A549 (cell line): ENCODE measurements at regions of chr12 and their contacts with region 1.

Region 1: DNA sequence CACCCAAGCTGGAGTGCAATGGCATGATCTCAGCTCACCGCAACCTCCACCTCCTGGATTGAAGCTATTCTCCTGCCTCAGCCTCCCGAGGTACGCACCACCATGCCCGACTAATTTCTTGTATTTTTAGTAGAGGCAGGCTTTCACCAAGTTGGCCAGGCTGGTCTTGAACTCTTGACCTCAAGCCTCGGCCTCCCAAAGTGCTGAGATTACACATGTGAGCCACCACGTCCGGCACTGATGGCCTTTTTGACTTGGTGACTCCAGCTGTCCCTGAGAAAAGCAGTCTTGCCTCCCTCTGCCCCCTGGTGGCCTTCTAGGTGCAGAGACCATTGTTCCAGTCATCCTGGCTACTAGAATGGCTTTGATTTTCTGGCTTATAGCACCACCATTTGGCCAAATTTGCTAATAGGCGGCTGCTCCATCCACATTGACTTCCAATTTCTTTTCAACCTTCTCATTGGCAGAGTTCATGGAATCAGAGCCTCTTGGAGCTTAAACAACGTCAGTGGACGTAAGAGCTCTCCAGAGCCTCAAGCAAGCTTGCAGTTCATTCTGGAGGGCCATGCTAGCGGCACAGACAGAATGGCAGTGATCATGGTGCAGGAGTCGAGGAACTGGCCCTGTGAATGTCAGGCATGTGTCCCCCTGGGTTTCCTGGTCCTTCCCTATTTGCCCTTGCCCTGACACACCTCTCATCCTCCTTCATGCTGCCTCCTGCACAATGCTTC is 25.4 kb upstream of the EIF4B start:
- DNase-seq: peak; percentile 89 to 97
- ATAC-seq: peak; percentile 76 to 84
- H3K4me3 ChIP-seq: no peak overlapping the region
- H3K27ac ChIP-seq: peak overlapping the region; percentile 39 to 91
- H3K4me1 ChIP-seq: peaks cover 28% of the 10 kb centered on the region
- CTCF ChIP-seq: peak; percentile 100
- EP300 ChIP-seq: no peak
- POLR2A ChIP-seq: no peak
- RAD21 ChIP-seq: peak; percentile 100

Region 2: GRCh38 chr12:52130711-52131110 is 850.1 kb before region 1 on chr12:
- CTCF ChIA-PET with region 1: interaction called, 12 read pairs
- POLR2A ChIA-PET with region 1: no interaction called
- DNase-seq: no peak
- ATAC-seq: no peak
- H3K4me3 ChIP-seq: no peak overlapping the region
- H3K27ac ChIP-seq: no peak overlapping the region
- H3K4me1 ChIP-seq: no peaks in the 10 kb centered on the region
- CTCF ChIP-seq: no peak
- EP300 ChIP-seq: no peak
- POLR2A ChIP-seq: no peak
- RAD21 ChIP-seq: no peak

Region 3: GRCh38 chr12:52156736-52157565 is 823.9 kb before region 1 on chr12:
- CTCF ChIA-PET with region 1: interaction called, 11 read pairs
- POLR2A ChIA-PET with region 1: no interaction called
- DNase-seq: peak; percentile 81 to 88
- ATAC-seq: peak; percentile 72 to 78
- H3K4me3 ChIP-seq: no peak overlapping the region
- H3K27ac ChIP-seq: peak overlapping the region; percentile 100
- H3K4me1 ChIP-seq: peaks cover 63% of the 10 kb centered on the region
- CTCF ChIP-seq: peak; percentile 97
- EP300 ChIP-seq: no peak
- POLR2A ChIP-seq: no peak
- RAD21 ChIP-seq: peak; percentile 99 to 100

Region 4: DNA sequence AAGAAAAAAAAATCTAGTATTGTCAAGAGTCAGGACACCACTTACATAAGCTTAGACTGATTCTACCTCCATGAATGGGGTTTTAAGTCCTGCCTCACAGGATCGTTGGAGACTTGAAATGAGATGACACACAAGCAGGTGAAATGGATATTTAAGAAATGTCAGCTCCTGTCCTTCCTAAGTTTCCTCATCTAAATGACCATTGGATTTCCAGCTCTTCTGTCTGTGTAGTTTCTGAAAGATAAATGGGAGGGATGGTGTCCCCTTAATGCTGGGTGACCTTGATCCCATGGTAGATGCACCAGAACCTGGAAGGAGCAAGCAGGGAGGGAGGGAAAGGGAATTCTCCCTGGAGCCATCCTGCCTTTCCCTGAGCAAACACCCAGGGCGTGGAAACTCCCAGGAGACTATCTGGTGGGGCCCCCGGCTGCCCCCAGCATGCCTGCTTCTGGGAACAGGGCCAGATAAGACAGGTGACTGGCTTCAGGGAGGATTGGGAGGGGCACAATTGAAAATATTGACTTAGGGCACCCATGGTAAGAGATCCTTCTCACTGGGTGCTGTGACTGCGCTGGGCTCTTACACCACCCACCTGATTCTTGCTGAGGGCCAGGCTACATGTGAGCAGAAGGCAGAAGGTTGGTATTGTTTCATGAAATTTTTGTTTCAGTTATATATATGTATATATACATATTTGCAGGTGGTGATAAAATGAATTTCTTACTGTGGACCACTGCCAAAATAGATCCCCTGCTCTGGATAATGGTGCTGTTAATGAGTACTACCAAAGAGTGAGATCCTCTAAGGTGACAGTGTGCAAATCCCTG is 85.6 kb before region 1 on chr12:
- CTCF ChIA-PET with region 1: interaction called, 1,736 read pairs
- POLR2A ChIA-PET with region 1: interaction called, 4 read pairs
- DNase-seq: peak; percentile 85 to 98
- ATAC-seq: peak; percentile 66 to 71
- H3K4me3 ChIP-seq: 0 out of 3 replicates have a peak overlapping the region, but pooled peaks have one; percentile 7
- H3K27ac ChIP-seq: peak overlapping the region; percentile 78 to 91
- H3K4me1 ChIP-seq: peaks cover 59% of the 10 kb centered on the region
- CTCF ChIP-seq: no peak
- EP300 ChIP-seq: peak; percentile 76 to 84; a peak in 2 of 5 replicates
- POLR2A ChIP-seq: no peak
- RAD21 ChIP-seq: 0 out of 5 replicates have a peak, but pooled peaks of 1 of the 2 experiments have one; percentile 27

Region 5: GRCh38 chr12:52924764-52925716 is 55.8 kb before region 1 on chr12:
- CTCF ChIA-PET with region 1: interaction called, 39 read pairs
- POLR2A ChIA-PET with region 1: interaction called, 3 read pairs
- DNase-seq: peak; percentile 85 to 94
- ATAC-seq: peak; percentile 57 to 80
- H3K4me3 ChIP-seq: peak overlapping the region; percentile 27; the same call in 2 of the 3 replicates
- H3K27ac ChIP-seq: peak overlapping the region; percentile 96 to 97
- H3K4me1 ChIP-seq: peaks cover 85% of the 10 kb centered on the region
- CTCF ChIP-seq: no peak
- EP300 ChIP-seq: peak; percentile 62 to 90; a peak in 4 of 5 replicates
- POLR2A ChIP-seq: no peak
- RAD21 ChIP-seq: peak in 1 of 2 experiments; percentile 32; a peak in 2 of 5 replicates

Region 6: GRCh38 chr12:52956987-52957386 is 23.9 kb before region 1 on chr12:
- CTCF ChIA-PET with region 1: interaction called, 171 read pairs
- POLR2A ChIA-PET with region 1: no interaction called
- DNase-seq: peak in 1 of 2 experiments; percentile 69
- ATAC-seq: peak; percentile 25 to 43; a peak in 3 of 6 replicates
- H3K4me3 ChIP-seq: no peak overlapping the region
- H3K27ac ChIP-seq: peak overlapping the region; percentile 18 to 61; a peak in 3 of 6 replicates
- H3K4me1 ChIP-seq: peaks cover 21% of the 10 kb centered on the region
- CTCF ChIP-seq: no peak
- EP300 ChIP-seq: no peak
- POLR2A ChIP-seq: no peak
- RAD21 ChIP-seq: no peak

Region 7: GRCh38 chr12:53005986-53006809 is 25.3 kb after region 1 on chr12 and contains the start of gene EIF4B:
- CTCF ChIA-PET with region 1: interaction called, 32 read pairs
- POLR2A ChIA-PET with region 1: interaction called, 3 read pairs
- DNase-seq: peak; percentile 96 to 100
- ATAC-seq: peak; percentile 94 to 95
- H3K4me3 ChIP-seq: peak within 1 kb of the TSS; percentile 88
- H3K27ac ChIP-seq: peak within 1 kb of the TSS; percentile 95 to 99
- H3K4me1 ChIP-seq: peaks cover 47% of the 10 kb centered on the region
- CTCF ChIP-seq: no peak
- EP300 ChIP-seq: peak in 1 of 2 experiments; percentile 3; a peak in 1 of 5 replicates
- POLR2A ChIP-seq: peak; percentile 63
- RAD21 ChIP-seq: no peak
- polyA plus RNA-seq, gene EIF4B: 577 and 650 TPM in 2 replicates

Region 8: DNA sequence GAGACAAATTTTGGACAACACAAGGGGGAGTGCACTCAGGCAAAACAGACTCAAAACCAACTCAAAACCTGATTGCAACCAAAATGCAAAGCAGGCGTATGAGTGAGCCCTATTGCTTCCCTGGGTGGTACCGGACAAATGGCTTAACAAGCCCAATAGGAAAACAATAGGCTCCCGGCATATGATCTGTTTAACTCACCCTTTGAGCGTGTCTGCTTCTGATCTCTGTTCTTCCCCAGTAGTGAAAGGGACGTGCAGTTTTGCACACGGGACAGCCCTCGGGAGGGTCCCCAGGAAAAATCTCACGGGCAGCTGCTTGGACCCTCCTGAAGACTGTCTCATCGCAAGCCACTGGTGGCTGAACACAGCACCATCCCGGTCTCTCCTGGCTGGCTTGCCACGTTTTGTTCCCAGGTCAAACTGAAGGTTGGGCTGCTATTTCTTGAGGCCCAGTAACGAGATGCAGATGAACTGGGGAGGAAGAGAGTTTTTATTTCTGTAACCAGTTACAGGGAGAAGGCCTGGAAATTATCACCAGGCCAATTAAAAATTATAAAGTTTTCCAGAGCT is 132.4 kb after region 1 on chr12:
- CTCF ChIA-PET with region 1: no interaction called
- POLR2A ChIA-PET with region 1: no interaction called
- DNase-seq: no peak
- ATAC-seq: no peak
- H3K4me3 ChIP-seq: no peak overlapping the region
- H3K27ac ChIP-seq: no peak overlapping the region
- H3K4me1 ChIP-seq: no peaks in the 10 kb centered on the region
- CTCF ChIP-seq: no peak
- EP300 ChIP-seq: no peak
- POLR2A ChIP-seq: no peak
- RAD21 ChIP-seq: no peak

Region 9: DNA sequence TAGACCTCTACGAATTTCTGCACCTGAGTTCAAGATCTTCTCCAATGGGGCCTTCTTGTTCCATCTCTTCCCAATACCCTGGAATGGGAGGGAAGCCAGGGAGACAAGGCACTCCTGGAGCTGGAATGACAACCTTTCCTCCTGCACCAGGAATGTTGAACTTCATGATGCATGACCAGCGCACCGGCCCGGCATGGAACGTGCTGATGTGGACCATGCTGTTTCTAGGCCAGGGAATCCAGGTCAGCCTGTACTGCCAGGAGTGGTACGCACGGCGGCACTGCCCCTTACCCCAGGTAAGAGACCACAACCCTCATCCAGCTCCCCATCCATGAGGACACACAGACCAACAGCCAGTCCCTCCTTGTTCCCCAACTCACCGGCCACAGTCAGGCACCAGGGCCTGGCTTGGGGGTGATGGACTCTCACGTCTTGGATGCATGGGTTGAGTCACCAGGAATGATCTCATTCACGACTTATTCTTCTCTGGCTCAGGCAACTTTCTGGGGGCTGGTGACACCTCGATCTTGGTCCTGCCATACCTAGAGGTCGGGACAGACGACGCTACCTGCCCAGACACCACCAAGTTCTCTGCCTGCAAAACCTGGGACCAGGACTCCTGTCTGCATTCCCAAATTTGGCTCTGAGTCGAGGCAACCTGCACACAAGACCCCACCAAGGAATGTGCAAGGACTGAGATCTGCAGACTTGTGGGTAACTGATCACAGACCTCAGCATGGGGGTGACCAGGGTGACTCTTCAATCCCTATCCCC is 142.9 kb after region 1 on chr12:
- CTCF ChIA-PET with region 1: no interaction called
- POLR2A ChIA-PET with region 1: no interaction called
- DNase-seq: peak in 1 of 2 experiments; percentile 45
- ATAC-seq: peak; percentile 58 to 63; a peak in 5 of 6 replicates
- H3K4me3 ChIP-seq: no peak overlapping the region
- H3K27ac ChIP-seq: no peak overlapping the region
- H3K4me1 ChIP-seq: peaks cover 11% of the 10 kb centered on the region; the same call in 2 of the 3 replicates
- CTCF ChIP-seq: no peak
- EP300 ChIP-seq: no peak
- POLR2A ChIP-seq: no peak
- RAD21 ChIP-seq: no peak